Breast epithelium (tissue), 4 donors: ENCODE measurements at regions of chr4 and their contacts with region 1.

Region 1: DNA sequence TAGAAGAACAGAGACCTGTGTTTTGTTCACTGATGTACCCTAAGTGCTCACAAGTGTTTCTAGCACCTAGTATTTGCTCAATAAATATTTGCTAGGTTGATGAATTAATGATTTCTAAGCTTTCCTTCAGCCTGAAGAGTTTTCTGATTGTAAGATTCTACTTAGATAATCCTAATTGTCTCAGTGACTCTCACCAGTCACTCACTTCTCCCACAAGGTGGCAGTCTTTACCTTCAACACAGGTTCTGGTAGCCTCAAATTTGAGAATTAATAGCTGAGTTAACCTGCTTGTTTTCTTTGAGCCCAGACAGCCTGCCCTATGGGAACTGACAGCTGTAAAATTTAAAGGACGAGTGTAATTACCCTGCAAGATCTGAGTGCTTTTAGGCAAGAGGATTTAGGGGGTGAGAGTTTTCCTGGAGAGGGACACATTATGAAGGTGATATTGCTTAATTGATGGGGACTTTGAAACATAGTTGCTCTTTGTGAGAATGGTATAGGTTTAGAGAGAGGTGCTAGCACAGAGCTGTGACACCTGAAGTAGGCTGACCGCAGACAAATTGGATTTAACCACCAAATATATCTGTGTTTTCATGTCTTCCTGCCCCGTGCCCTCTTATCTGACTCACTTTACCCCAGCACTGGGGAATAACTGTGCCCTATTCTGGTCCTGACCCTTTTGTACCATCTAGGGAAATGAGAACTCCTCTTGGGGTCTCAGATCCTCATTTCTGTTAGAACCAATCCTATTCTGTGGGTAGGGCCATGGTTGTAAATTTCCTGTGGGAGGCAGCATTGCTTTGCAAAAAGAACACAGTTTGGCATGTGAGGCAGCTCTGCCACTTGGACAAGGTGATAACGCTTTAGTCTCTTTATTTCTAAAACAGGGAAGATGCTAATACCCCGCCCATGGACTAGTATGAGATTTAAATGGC is 27.7 kb downstream of the CD38 start:
- DNase-seq: no peak
- H3K4me3 ChIP-seq: no peak overlapping the region
- H3K27ac ChIP-seq: no peak overlapping the region
- H3K4me1 ChIP-seq: no peaks in the 10 kb centered on the region
- H3K27me3 ChIP-seq: no peaks in the 10 kb centered on the region
- CTCF ChIP-seq: peak; percentile 14 to 50 (median 48)
- POLR2A ChIP-seq: no peak

Region 2: DNA sequence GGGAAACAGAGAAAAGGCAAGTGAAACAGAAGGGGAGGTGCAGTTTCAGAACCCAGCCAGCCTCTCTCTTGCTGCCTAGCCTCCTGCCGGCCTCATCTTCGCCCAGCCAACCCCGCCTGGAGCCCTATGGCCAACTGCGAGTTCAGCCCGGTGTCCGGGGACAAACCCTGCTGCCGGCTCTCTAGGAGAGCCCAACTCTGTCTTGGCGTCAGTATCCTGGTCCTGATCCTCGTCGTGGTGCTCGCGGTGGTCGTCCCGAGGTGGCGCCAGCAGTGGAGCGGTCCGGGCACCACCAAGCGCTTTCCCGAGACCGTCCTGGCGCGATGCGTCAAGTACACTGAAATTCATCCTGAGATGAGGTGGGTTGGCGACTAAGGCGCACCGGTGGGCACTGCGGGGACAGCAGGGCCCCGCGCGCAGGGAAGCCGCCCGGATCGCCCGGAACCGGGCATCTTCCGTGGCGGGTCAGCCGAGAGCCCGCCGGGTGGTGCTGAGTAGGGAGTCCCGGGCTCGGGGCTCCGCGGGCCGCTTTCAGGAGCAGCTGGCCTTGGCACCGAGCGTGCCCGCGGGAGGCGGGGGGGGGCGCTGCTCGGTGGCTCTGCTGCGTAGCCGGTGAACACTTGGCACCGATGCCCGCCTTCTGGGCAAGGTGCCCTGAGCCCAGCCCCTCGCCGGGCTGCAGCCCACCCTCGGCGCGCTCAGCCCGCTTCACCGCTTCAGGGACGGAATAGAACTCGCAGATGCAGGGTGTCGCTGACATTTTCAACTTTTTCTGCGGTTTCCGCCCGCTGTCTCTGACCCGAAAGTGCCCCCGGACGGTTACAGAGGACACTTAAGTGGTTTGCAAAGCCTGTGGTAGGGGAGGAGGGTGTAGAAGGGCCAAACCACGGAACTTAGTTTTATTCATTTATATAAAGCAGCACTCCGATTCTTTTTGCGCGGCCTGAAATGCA is 27.3 kb before region 1 on chr4 and contains the start of gene CD38:
- intact Hi-C with region 1: loop called (anchors 1 kb)
- DNase-seq: no peak
- H3K4me3 ChIP-seq: peak within 1 kb of the TSS; percentile 48 to 70 (median 58)
- H3K27ac ChIP-seq: no peak within 1 kb of the TSS
- H3K4me1 ChIP-seq: peaks cover 0 to 9% of the 10 kb centered on the region in 2 donors
- H3K27me3 ChIP-seq: peaks cover 0 to 7% of the 10 kb centered on the region in 2 donors
- CTCF ChIP-seq: no peak
- POLR2A ChIP-seq: no peak
- total RNA-seq, gene CD38: 2.0 to 47.2 (median 2.6) TPM

Region 3: DNA sequence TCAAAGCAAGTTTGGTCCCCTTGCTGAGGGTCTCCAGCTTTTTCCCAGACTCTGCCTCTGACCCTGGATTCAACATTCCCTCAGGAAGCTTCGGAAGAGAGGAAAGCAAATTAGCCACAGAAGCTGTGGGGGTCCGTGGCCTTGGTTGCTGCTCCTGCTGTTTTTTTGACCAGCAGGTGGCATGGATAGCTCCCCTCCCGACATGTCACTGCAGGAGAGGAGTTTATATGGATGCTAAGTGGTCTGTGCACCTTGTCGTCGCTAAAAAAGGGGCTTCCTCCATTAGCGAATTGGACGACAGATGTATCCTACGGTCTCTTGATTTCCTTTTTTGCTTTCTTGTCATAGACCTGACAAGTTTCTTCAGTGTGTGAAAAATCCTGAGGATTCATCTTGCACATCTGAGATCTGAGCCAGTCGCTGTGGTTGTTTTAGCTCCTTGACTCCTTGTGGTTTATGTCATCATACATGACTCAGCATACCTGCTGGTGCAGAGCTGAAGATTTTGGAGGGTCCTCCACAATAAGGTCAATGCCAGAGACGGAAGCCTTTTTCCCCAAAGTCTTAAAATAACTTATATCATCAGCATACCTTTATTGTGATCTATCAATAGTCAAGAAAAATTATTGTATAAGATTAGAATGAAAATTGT is 42.5 kb after region 1 on chr4:
- intact Hi-C with region 1: no loop called
- DNase-seq: no peak
- H3K4me3 ChIP-seq: no peak overlapping the region
- H3K27ac ChIP-seq: no peak overlapping the region
- H3K4me1 ChIP-seq: no peaks in the 10 kb centered on the region
- H3K27me3 ChIP-seq: no peaks in the 10 kb centered on the region
- CTCF ChIP-seq: no peak
- POLR2A ChIP-seq: no peak